PC-9 (cell line): ENCODE measurements at regions of chr15 and their contacts with region 1.

Region 1: DNA sequence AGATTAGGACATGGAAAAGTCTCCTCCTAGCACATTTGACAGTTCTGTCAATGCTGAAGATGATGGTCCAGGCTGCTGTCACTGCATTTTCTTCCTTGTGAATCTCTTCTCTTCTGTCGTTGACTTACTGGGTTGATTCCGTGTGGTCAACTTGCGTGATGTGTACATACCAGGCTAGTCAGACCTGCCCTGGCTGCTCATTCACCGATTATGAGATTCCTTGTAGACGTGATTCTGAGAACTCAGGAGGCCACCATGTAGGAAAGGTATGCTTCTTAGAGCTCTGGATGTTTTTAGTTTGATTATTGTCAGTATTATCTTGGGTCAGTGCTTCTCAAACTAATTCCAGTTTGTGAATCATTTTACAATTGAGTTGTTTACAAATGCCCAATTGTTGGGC is 322.0 kb upstream of the C2CD4B start:
- DNase-seq: no peak
- H3K4me3 ChIP-seq: no peak overlapping the region
- H3K27ac ChIP-seq: no peak overlapping the region
- H3K4me1 ChIP-seq: no peaks in the 10 kb centered on the region
- H3K27me3 ChIP-seq: no peaks in the 10 kb centered on the region
- CTCF ChIP-seq: no peak

Region 2: DNA sequence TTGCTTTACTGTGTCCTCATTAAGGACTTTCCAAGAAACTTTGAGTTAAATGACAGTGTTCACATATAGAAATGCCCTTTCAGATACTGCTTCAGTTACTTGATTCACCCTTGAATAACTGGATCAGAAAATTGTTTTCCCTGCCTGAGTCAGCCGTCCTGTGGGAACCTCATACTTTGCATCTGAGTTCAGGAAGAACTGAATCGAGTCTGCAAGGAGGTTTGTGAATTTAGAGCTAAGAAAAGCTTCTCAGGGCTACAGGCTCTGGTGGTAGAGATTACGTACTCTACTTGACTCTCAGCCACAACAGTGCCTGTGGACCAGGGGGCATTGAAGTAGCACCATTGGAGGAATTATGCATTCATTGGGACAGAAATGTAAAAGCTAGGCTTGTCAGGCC is 69.7 kb before region 1 on chr15:
- CTCF ChIA-PET with region 1: no interaction called
- POLR2A ChIA-PET with region 1: no interaction called
- intact Hi-C with region 1: no loop called
- DNase-seq: no peak
- H3K4me3 ChIP-seq: no peak overlapping the region
- H3K27ac ChIP-seq: no peak overlapping the region
- H3K4me1 ChIP-seq: no peaks in the 10 kb centered on the region
- H3K27me3 ChIP-seq: no peaks in the 10 kb centered on the region
- CTCF ChIP-seq: no peak

Region 3: DNA sequence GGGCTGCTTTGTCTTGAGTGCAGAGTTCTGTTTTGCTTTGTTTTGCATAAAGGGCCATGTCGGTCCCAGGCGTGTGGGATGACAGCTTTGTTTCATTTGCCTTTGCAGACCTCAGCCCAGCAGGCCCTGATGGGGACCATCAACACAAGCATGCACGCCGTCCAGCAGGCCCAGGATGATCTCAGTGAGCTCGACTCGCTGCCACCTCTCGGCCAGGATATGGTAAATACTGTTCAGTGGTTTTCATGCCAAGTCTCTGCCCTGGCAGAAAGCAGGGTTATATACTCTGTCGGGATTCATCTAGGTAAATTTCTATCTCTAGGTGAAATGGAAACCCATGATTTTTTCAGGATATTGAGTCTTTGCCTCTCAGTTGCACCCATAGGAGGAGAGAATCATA is 211.6 kb after region 1 on chr15:
- CTCF ChIA-PET with region 1: no interaction called
- POLR2A ChIA-PET with region 1: interaction called, 12 read pairs
- intact Hi-C with region 1: no loop called
- DNase-seq: no peak
- H3K4me3 ChIP-seq: no peak overlapping the region
- H3K27ac ChIP-seq: no peak overlapping the region
- H3K4me1 ChIP-seq: no peaks in the 10 kb centered on the region
- H3K27me3 ChIP-seq: no peaks in the 10 kb centered on the region
- CTCF ChIP-seq: no peak